Naive thymus-derived CD4-positive, alpha-beta T cell (primary cell): ENCODE measurements at regions of chr1 and their contacts with region 1.

Region 1: GRCh38 chr1:202957733-202958543 is at the start of gene ADIPOR1:
- DNase-seq: peak; percentile 88 to 96 (median 94)
- ATAC-seq: peak; percentile 99
- H3K4me3 ChIP-seq: peak within 1 kb of the TSS; percentile 84
- H3K4me3 Mint-ChIP-seq: peak within 1 kb of the TSS; percentile 76 to 97 (median 92)
- H3K27ac ChIP-seq: peak within 1 kb of the TSS; percentile 95
- H3K27ac Mint-ChIP-seq: peak within 1 kb of the TSS; percentile 86 to 98 (median 95)
- H3K4me1 ChIP-seq: peaks cover 19 to 39% of the 10 kb centered on the region in 2 donors
- H3K4me1 Mint-ChIP-seq: peaks cover 20 to 55% (median 52%) of the 10 kb centered on the region in 7 donors
- H3K27me3 ChIP-seq: no peaks in the 10 kb centered on the region
- H3K27me3 Mint-ChIP-seq: no peaks in the 10 kb centered on the region
- total RNA-seq, gene ADIPOR1: 51.9 to 84.5 (median 69.6) TPM

Region 2: DNA sequence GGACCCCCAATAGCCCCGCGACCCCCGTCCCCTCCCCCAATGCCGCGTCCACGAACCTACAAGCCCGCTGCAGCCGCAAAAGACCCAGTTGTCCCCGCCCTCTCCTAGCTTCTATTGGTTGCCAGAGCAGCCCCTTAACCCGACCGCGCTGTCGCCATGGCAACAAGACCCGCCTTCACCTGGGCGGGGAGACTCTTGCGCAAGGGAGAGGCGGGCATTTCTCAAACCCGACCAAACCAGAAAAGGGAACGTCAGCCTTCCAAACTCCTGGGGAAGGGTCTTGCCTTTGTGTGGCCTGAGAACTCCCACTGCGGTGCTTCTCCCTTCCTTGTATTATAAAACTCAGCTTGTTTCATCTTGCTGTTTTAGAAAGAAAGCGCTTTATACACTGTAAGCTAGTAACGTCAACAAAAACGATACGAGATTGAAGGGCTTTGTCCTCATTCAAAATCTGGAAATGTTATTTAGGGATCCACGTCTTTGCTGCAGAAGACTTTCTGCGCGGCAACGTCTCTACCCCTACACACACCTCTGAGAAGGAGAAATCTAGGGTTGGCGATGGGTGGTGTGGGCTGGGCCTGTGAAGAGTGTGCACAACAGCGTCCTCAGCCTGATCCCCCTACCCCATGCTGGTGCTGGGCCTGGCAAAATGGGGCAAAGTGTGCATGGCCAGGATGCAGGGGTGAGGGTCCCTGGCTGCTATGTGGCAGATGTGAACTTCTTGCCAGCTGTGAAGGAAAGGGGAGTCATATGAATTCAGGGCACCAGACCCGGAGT is 1803.4 kb before region 1 on chr1 and contains the start of gene TMEM9:
- CTCF ChIA-PET with region 1: no interaction called
- POLR2A ChIA-PET with region 1: no interaction called
- intact Hi-C with region 1: loop called in 1 of 2 experiments (anchors 10 kb)
- DNase-seq: peak; percentile 94 to 99 (median 97)
- ATAC-seq: peak; percentile 97
- H3K4me3 ChIP-seq: peak within 1 kb of the TSS; percentile 48
- H3K4me3 Mint-ChIP-seq: peak within 1 kb of the TSS; percentile 86 to 94 (median 93)
- H3K27ac ChIP-seq: peak within 1 kb of the TSS; percentile 65
- H3K27ac Mint-ChIP-seq: peak within 1 kb of the TSS; percentile 83 to 96 (median 91)
- H3K4me1 ChIP-seq: peaks cover 7 to 14% of the 10 kb centered on the region in 2 donors
- H3K4me1 Mint-ChIP-seq: peaks cover 12 to 36% (median 20%) of the 10 kb centered on the region in 7 donors
- H3K27me3 ChIP-seq: no peaks in the 10 kb centered on the region
- H3K27me3 Mint-ChIP-seq: peaks cover 6 to 25% (median 9%) of the 10 kb centered on the region in 5 donors
- total RNA-seq, gene TMEM9: 15.3 to 24.5 (median 16.7) TPM

Region 3: GRCh38 chr1:202765721-202766120 is 192.2 kb before region 1 on chr1:
- CTCF ChIA-PET with region 1: no interaction called
- POLR2A ChIA-PET with region 1: no interaction called
- intact Hi-C with region 1: loop called in 1 of 2 experiments (anchors 10 kb)
- DNase-seq: no peak
- ATAC-seq: no peak
- H3K4me3 ChIP-seq: no peak overlapping the region
- H3K4me3 Mint-ChIP-seq: no peak overlapping the region
- H3K27ac ChIP-seq: no peak overlapping the region
- H3K27ac Mint-ChIP-seq: no peak overlapping the region
- H3K4me1 ChIP-seq: no peaks in the 10 kb centered on the region
- H3K4me1 Mint-ChIP-seq: peaks cover 0 to 3% (median 0%) of the 10 kb centered on the region in 7 donors
- H3K27me3 ChIP-seq: no peaks in the 10 kb centered on the region
- H3K27me3 Mint-ChIP-seq: no peaks in the 10 kb centered on the region

Region 4: DNA sequence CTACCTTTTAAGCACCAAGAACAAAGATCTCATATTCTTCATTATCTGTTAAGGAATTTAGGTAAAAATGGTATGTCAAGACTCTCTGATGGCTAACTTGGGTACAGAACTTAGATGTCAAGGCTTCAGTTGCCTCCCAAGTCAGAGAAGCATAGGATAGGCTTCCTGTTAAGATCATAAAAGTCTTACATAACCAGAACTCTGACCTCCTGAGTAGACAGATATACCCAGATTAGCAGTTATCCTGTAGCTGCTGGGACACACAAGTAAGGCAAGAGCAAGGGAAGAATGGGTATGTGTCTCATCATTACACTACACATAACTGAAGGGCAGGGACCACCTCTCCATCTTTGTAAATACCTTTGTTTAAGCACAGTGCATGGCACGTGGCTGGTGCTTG is 15.5 kb before region 1 on chr1:
- CTCF ChIA-PET with region 1: no interaction called
- POLR2A ChIA-PET with region 1: interaction called, 6 read pairs
- intact Hi-C with region 1: loop called in 1 of 2 experiments (anchors 2 kb)
- DNase-seq: no peak
- ATAC-seq: no peak
- H3K4me3 ChIP-seq: no peak overlapping the region
- H3K4me3 Mint-ChIP-seq: no peak overlapping the region
- H3K27ac ChIP-seq: no peak overlapping the region
- H3K27ac Mint-ChIP-seq: peak overlapping the region in 2 of 9 donors; percentile 7 to 66
- H3K4me1 ChIP-seq: no peaks in the 10 kb centered on the region
- H3K4me1 Mint-ChIP-seq: peaks cover 0 to 3% (median 0%) of the 10 kb centered on the region in 7 donors
- H3K27me3 ChIP-seq: no peaks in the 10 kb centered on the region
- H3K27me3 Mint-ChIP-seq: no peaks in the 10 kb centered on the region

Region 5: DNA sequence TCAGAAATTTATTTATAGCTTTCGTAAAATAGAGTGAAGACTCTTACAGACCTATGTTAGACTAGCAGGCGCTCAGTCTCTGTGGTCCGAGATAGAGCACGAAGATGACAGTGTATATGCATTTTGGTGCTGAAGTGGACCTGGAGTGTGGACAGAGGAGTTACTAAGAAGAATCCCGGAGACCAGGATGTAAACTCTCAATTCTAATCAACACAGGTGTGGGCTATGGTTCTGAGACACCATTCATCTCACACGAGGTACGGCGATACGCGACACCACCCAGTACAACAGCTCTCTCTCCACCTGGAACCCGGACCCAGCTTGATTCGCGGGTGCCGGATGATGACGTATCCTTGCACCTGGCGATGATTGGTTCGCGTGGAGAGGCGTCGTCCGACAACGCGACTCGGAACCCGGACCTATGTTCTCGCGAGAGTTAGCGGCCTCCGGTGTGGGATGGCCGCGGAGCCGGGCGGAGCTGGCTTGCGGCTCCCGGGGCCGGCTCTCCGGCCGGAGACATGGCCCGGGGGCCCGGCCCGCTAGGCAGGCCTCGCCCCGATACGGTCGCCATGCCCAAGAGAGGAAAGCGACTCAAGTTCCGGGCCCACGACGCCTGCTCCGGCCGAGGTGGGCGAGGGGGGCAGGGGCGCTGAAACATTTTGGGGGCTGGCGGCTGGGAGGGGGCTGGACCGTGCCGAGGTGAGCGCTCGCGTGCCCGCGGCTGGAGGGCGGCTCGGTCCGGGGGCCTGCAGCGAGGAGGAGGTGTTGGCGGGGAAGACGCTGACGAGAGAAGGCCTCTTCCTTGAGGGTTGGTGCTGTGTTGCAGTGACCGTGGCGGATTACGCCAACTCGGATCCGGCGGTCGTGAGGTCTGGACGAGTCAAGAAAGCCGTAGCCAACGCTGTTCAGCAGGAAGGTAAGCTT is 49.3 kb after region 1 on chr1 and contains the start of gene TMEM183A:
- CTCF ChIA-PET with region 1: interaction called, 5 read pairs
- POLR2A ChIA-PET with region 1: interaction called, 5 read pairs
- intact Hi-C with region 1: loop called (anchors 1 kb)
- DNase-seq: peak; percentile 77 to 95 (median 92)
- ATAC-seq: peak; percentile 96
- H3K4me3 ChIP-seq: peak within 1 kb of the TSS; percentile 91
- H3K4me3 Mint-ChIP-seq: peak within 1 kb of the TSS; percentile 91 to 100 (median 96)
- H3K27ac ChIP-seq: peak within 1 kb of the TSS; percentile 90
- H3K27ac Mint-ChIP-seq: peak within 1 kb of the TSS; percentile 93 to 99 (median 98)
- H3K4me1 ChIP-seq: peaks cover 10 to 14% of the 10 kb centered on the region in 2 donors
- H3K4me1 Mint-ChIP-seq: peaks cover 24 to 46% (median 36%) of the 10 kb centered on the region in 7 donors
- H3K27me3 ChIP-seq: no peaks in the 10 kb centered on the region
- H3K27me3 Mint-ChIP-seq: peaks cover 0 to 4% (median 0%) of the 10 kb centered on the region in 5 donors
- total RNA-seq, gene TMEM183A: 61.4 to 134 (median 77.0) TPM

Region 6: GRCh38 chr1:203320591-203321272 is 362.8 kb after region 1 on chr1:
- CTCF ChIA-PET with region 1: no interaction called
- POLR2A ChIA-PET with region 1: no interaction called
- intact Hi-C with region 1: loop called in 1 of 2 experiments (anchors 2 kb)
- DNase-seq: peak in 8 of 9 donors; percentile 50 to 93 (median 88)
- ATAC-seq: peak; percentile 76
- H3K4me3 ChIP-seq: peak overlapping the region; percentile 41
- H3K4me3 Mint-ChIP-seq: peak overlapping the region; percentile 66 to 88 (median 80)
- H3K27ac ChIP-seq: peak overlapping the region; percentile 98
- H3K27ac Mint-ChIP-seq: peak overlapping the region; percentile 85 to 100 (median 99)
- H3K4me1 ChIP-seq: peaks cover 66 to 74% of the 10 kb centered on the region in 2 donors
- H3K4me1 Mint-ChIP-seq: peaks cover 77 to 95% (median 92%) of the 10 kb centered on the region in 7 donors
- H3K27me3 ChIP-seq: no peaks in the 10 kb centered on the region
- H3K27me3 Mint-ChIP-seq: no peaks in the 10 kb centered on the region